GM13977 (cell line): ENCODE measurements at regions of chr12 and their contacts with region 1.

Region 1: GRCh38 chr12:68610370-68611093 is at the start of gene RAP1B:
- DNase-seq: peak; percentile 96
- CTCF ChIP-seq: no peak

Region 2: DNA sequence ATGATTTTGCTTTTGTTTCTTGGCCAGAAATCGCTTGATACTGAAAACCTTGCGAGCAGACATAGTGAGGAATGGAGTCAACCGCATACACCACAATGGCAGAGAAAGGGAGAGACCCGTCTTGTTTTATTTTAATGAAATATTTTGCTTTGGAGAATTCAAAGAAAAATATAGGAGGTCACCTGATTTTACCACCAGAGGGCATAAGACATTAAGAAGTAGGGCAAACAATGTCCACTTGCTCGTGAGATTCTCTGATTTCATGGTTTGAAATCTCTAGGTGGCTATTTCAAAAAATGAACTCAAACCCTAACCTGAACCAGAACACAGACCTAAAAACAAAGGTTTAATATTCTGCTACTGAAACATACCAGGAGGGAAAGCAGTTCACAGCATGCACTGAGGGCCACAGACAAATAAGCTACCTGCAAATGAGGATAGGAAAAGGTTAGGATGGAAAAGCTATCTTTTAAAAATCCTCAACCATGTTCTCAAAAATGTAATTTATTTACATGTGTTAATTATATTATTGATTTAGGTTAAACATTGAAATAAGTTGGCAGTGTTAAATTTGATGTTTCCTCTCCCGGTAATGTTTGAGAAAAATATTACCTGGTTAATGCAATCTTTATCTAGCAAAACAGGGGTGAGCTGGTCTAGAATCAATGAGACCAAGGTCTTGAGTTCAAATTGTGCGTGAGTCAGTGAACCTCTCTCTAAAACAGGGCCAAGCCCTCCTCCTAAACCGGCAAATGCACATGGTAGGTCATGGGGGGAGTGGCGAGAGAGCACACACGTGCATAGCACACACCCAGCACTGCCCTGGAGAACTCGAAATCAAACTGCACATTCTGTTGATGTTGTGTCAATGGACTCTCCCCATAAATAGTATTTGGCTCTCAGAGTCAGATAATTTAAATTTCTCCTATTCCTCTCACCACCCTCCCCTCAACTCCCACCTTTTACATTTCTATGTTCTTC is 608.8 kb before region 1 on chr12:
- in situ Hi-C with region 1: no loop called
- DNase-seq: no peak
- CTCF ChIP-seq: peak; percentile 32

Region 3: DNA sequence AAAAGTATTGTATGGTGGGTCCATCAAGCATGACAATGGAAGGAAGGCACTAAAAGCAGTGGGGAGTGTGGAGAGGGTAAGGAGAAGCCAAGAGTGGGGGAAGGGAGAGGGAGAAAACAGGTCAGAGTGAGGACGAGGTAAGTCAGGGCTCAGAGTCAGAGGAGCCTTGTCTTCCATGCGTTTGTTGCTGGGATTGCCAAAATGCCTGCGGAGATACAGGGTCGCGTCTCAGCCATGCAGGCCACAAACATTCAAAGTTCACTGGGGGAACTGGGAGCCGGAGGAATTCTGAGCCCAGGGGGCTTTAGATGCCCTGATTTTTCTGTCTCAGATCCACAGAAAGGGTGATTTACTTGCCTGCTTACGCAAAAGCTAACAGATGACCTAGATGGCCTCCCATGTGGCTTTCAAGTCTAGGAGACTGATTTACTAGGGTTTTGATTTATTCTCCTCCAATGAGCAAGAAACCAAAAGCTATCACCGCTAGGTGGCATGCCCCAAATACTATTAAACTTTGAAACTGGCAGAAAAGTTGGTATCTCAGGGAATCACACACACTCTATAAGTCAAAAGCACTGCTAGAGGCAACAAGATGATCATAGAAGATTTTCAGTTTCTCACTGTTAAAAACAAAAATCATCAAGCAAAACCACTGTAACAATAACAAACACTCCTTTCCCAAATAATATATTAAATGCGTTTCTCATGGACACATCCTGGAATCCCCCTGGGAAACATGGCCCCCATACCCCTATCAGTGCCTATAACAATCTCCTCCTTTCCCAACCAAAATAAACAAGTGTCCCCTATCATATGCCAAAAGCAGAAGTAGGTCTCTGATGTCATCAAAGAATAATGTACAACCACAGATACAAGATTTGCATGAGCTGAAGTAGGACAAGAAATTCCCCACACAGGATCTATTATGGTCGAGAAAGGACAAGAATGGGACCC is 251.7 kb before region 1 on chr12:
- in situ Hi-C with region 1: loop called (anchors 25 kb)
- DNase-seq: peak; percentile 44
- CTCF ChIP-seq: peak; percentile 60

Region 4: GRCh38 chr12:68428724-68429501 is 181.6 kb before region 1 on chr12:
- in situ Hi-C with region 1: no loop called
- DNase-seq: no peak
- CTCF ChIP-seq: peak; percentile 5